ENCODE measurements at regions of chr3 and their contacts with region 1.

Region 1: DNA sequence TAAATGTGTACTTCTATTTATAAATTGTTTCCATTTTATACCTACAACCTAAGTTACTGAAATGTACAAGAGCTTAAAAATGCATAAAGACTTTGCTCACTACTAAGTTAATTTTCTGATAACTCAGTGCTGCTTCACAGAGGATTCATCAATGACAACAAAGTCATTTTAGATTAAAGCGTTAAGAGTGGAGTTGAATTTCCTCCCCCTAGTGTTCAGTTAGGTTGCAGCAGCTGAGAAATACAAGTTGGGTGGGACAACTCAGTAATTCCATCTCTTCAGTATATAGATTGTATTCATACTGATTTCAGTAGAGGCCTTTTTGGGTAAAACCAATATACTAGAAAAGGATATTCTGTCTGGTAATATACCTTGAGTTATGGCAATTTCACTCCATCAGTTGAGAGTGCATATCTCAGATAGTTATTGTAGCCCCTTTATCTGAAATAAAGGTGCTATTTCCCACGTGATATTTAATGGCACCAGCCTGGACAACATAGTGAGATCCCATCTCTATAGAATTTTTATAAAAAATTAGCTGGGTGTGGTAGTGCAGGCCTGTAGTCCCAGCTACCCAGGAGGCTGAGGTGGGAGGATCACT is 6.9 kb upstream of the RPL35A start:
- DNase-seq: peak; percentile 42
- H3K27ac ChIP-seq: no peak overlapping the region
- CTCF ChIP-seq: peak; percentile 81

Region 2: GRCh38 chr3:196793235-196793641 is 1149.8 kb before region 1 on chr3:
- CTCF ChIA-PET with region 1: no interaction called
- POLR2A ChIA-PET with region 1: no interaction called
- DNase-seq: peak; percentile 94
- H3K27ac ChIP-seq: peak overlapping the region; percentile 85; the same call in 1 of the 2 replicates
- CTCF ChIP-seq: no peak

Region 3: DNA sequence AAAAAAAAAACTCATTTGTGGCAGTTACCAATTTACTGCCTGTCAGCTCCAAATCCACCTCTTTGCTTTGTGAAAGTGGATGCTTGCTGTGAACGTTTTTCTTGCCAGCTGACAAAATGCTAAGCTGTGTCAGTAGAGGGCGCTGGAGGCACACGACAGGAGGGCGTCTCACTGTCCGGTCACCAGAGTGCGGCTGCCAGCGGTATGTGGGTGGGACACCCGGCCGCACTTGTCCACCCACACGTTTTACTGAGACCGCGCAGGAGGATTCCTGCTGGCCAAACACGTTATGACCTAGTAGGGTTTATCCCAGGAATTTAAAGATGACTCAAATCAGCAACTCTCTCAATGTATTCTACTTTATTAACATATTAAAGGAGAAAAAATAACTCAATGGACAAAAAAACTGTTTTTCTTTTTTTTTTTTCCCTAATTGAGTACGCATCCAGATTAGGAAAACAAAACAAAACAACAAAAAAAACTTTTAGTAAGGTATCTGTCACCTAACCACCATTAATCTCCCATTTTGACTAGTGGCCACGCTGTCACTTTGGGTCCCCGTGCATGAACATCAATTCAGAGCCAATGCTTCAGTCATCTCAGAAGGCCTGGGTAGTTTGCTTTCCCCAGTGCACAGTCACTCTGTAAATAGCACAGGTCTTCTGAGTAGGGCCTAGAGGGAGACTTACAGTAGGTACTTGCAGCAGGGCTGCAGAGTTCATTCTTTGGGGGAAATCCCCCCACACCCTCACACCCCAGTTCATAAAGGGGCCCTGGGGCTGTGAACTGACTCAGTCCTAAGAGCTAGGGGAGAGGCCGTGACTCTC is 36.8 kb before region 1 on chr3:
- CTCF ChIA-PET with region 1: interaction called, 13 read pairs
- POLR2A ChIA-PET with region 1: no interaction called
- DNase-seq: peak; percentile 86
- H3K27ac ChIP-seq: peak overlapping the region; percentile 7; the same call in 1 of the 2 replicates
- CTCF ChIP-seq: peak; percentile 96

Region 4: GRCh38 chr3:198061119-198062067 is 118.3 kb after region 1 on chr3:
- CTCF ChIA-PET with region 1: no interaction called
- POLR2A ChIA-PET with region 1: no interaction called
- DNase-seq: no peak
- H3K27ac ChIP-seq: no peak overlapping the region
- CTCF ChIP-seq: no peak